ENCODE measurements at regions of chr17 and their contacts with region 1.

Region 1: DNA sequence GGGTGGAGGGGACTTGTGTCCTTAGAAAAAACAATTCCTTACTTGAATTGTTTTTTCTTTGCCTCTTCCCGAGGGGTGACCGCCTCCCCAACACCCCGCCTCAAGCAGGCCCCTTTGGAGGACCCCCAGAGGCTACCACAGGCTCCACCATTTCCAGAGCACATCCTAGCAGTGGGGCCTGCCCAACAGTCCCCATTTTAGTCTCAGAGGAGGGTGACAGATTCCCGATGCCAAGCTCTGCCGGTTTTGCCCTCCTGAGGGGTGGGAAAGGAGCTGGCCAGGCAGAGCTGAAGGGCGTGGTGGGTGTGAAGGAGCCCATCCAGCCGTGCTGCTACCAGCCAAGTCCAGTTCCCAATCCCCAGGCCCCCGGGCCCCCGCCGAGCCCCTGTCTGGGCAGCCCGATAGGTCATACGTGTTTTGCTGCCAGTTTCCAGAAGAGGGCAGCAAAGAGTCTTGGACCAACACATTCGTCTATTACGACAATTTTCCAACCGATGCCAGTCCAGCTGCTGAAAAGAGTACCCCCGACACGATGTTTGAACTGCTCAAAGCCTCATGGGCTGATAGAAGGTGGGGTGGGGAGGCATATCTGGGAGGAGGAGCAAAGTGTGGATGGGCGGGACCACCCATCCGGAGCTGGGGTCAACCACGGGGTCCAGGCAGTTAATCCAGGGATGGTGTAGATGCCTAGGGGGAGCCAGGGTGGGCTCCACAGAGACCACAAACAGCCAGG is 18.8 kb upstream of the GAA start:
- DNase-seq: peak; percentile 74 to 82
- H3K4me3 ChIP-seq: no peak overlapping the region
- H3K4me3 Mint-ChIP-seq: no peak overlapping the region
- H3K27ac Mint-ChIP-seq: no peak overlapping the region
- H3K4me1 ChIP-seq: no peaks in the 10 kb centered on the region
- H3K4me1 Mint-ChIP-seq: peaks cover 9% of the 10 kb centered on the region
- H3K27me3 ChIP-seq: no peaks in the 10 kb centered on the region
- H3K27me3 Mint-ChIP-seq: peaks cover 3% of the 10 kb centered on the region
- CTCF ChIP-seq: peak; percentile 80 to 89

Region 2: GRCh38 chr17:79942591-79943346 is 139.8 kb before region 1 on chr17:
- CTCF ChIA-PET with region 1: no interaction called
- POLR2A ChIA-PET with region 1: no interaction called
- intact Hi-C with region 1: no loop called
- DNase-seq: peak in 1 of 2 experiments; percentile 23
- H3K4me3 ChIP-seq: no peak overlapping the region
- H3K4me3 Mint-ChIP-seq: no peak overlapping the region
- H3K27ac Mint-ChIP-seq: peak overlapping the region; percentile 45
- H3K4me1 ChIP-seq: no peaks in the 10 kb centered on the region
- H3K4me1 Mint-ChIP-seq: no peaks in the 10 kb centered on the region
- H3K27me3 ChIP-seq: no peaks in the 10 kb centered on the region
- H3K27me3 Mint-ChIP-seq: no peaks in the 10 kb centered on the region
- CTCF ChIP-seq: no peak

Region 3: DNA sequence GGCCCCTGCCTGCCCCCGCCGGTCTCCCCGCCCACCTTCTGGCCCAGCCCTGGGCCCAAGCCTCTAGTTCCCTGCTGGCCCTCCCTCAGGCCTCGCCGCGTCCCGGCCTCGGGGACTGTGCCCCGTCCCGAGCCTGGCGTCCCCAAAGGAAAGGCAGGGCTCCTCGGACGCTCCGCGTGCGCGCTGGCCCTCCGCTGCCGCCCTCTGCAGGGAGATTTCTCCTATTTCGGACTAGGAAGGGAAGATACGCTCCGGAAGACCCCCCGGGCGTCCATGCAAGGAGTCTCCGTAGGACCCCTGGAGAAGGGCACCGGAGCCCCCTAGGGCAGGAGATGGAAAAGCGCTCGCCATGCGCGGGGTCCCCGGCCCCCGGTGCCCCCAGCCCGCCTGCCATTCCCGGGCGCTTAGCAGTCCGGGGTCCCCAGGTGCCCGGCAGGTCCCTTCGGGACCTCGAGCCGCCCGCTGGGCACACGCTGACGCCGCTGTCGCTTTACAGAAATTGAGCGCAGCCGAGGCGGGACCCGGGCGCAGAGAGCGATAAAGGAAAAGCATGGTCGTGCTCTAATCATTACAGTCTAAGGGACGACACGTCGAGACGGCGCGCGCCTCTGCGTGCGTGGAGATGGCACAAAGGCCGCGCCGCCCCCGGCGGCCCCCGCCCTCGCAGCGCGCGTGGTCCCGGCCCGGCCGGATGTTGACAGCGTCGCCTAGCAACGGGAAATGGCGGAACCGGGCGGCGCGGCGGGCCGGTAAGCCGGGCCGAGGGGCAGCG is 46.4 kb before region 1 on chr17 and contains the start of gene CCDC40:
- CTCF ChIA-PET with region 1: no interaction called
- POLR2A ChIA-PET with region 1: no interaction called
- intact Hi-C with region 1: loop called (anchors 5 kb)
- DNase-seq: peak; percentile 84 to 91
- H3K4me3 ChIP-seq: peak within 1 kb of the TSS; percentile 63
- H3K4me3 Mint-ChIP-seq: peak within 1 kb of the TSS; percentile 88
- H3K27ac Mint-ChIP-seq: peak within 1 kb of the TSS; percentile 99
- H3K4me1 ChIP-seq: peaks cover 4% of the 10 kb centered on the region; the same call in 1 of the 2 replicates
- H3K4me1 Mint-ChIP-seq: peaks cover 9% of the 10 kb centered on the region
- H3K27me3 ChIP-seq: no peaks in the 10 kb centered on the region
- H3K27me3 Mint-ChIP-seq: no peaks in the 10 kb centered on the region
- CTCF ChIP-seq: peak in 1 of 2 experiments; percentile 14
- total RNA-seq, gene CCDC40: 3.7 and 3.9 TPM in 2 replicates

Region 4: DNA sequence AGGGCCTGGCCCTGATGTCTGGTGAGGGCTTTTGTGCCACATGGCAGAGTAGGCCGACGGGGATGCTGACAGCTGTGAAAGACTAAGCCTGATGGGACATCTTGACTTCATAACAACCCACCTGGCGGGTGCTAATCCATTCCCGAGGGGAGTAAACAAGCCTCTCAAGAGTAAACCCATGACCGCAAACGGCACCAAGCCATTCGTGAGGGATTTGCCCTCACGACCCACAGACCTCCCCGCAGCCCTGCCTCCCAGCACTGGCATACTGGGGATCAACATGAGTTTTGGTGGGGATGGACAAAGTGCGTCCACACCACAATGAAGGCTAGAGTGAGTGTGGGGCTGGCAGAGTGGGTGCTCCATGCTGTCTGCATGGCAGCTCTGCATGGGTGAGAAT is 189.8 kb after region 1 on chr17:
- CTCF ChIA-PET with region 1: no interaction called
- POLR2A ChIA-PET with region 1: no interaction called
- intact Hi-C with region 1: no loop called
- DNase-seq: no peak
- H3K4me3 ChIP-seq: no peak overlapping the region
- H3K4me3 Mint-ChIP-seq: no peak overlapping the region
- H3K27ac Mint-ChIP-seq: no peak overlapping the region
- H3K4me1 ChIP-seq: no peaks in the 10 kb centered on the region
- H3K4me1 Mint-ChIP-seq: no peaks in the 10 kb centered on the region
- H3K27me3 ChIP-seq: no peaks in the 10 kb centered on the region
- H3K27me3 Mint-ChIP-seq: no peaks in the 10 kb centered on the region
- CTCF ChIP-seq: no peak

Measured in Caco-2 (cell line).